Dendritic cell treated with granulocyte-macrophage colony-stimulating factor and Interleukin-4, amounts not matched to agents 40 ng/mL and 50 ng/mL, for 4 days (primary cell): ENCODE measurements at regions of chr1 and their contacts with region 1.

Region 1: GRCh38 chr1:230268366-230269170 is 157.6 kb downstream of the PGBD5 start:
- H3K4me3 Mint-ChIP-seq: no peak overlapping the region
- H3K27ac Mint-ChIP-seq: no peak overlapping the region
- H3K4me1 Mint-ChIP-seq: peaks cover 11% of the 10 kb centered on the region
- H3K27me3 Mint-ChIP-seq: no peaks in the 10 kb centered on the region

Region 2: GRCh38 chr1:230084138-230084880 is 184.3 kb before region 1 on chr1:
- intact Hi-C with region 1: loop called (anchors 10 kb)
- H3K4me3 Mint-ChIP-seq: no peak overlapping the region
- H3K27ac Mint-ChIP-seq: peak overlapping the region; percentile 31
- H3K4me1 Mint-ChIP-seq: peaks cover 37% of the 10 kb centered on the region
- H3K27me3 Mint-ChIP-seq: no peaks in the 10 kb centered on the region

Region 3: DNA sequence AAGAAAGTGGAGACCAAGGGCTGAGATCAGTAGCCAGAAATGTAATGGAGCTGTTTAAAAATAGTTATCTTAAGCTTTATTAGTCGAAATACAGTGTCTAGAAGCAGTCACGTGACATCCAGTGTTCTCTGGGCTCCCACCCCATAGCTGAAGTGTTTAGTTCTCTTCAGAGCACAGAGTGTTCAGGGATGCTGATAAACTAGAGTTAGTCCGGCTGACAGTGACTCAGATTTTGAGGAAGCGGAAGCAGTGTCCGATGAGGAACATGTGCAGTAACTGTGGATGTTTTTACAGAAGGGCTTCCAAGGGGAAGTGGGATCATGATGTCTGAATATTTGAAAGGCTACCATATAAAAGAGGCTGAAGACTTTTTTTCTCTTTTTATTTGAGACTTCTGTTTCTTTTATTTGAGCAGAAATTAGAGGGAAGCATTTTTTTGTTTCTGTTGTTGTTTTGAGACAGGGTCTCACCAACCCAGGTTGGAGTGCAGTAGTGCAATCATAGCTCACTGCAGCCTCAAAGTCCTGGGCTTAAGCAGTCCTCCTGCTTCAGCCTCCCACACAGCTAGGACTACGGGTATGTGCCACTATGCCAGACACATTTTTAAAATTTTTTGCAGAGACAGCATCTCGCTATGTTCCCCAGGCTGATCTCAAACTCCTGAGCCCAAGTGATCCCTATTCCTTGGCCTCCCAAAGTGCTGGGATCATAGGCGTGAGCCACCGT is 77.3 kb before region 1 on chr1:
- intact Hi-C with region 1: loop called (anchors 5 kb)
- H3K4me3 Mint-ChIP-seq: peak overlapping the region; percentile 33
- H3K27ac Mint-ChIP-seq: peak overlapping the region; percentile 86
- H3K4me1 Mint-ChIP-seq: peaks cover 50% of the 10 kb centered on the region
- H3K27me3 Mint-ChIP-seq: no peaks in the 10 kb centered on the region

Region 4: GRCh38 chr1:230542054-230542453 is 273.5 kb after region 1 on chr1:
- intact Hi-C with region 1: no loop called
- H3K4me3 Mint-ChIP-seq: no peak overlapping the region
- H3K27ac Mint-ChIP-seq: no peak overlapping the region
- H3K4me1 Mint-ChIP-seq: no peaks in the 10 kb centered on the region
- H3K27me3 Mint-ChIP-seq: peaks cover 9% of the 10 kb centered on the region